ENCODE measurements at regions of chr3 and their contacts with region 1.

Region 1: GRCh38 chr3:161423911-161424522 is 52.7 kb upstream of the SPTSSB start:
- DNase-seq: peak; percentile 22
- H3K4me3 ChIP-seq: no peak overlapping the region
- H3K27ac ChIP-seq: no peak overlapping the region
- H3K4me1 ChIP-seq: peaks cover 14% of the 10 kb centered on the region
- H3K27me3 ChIP-seq: no peaks in the 10 kb centered on the region
- CTCF ChIP-seq: peak; percentile 49 to 55

Region 2: DNA sequence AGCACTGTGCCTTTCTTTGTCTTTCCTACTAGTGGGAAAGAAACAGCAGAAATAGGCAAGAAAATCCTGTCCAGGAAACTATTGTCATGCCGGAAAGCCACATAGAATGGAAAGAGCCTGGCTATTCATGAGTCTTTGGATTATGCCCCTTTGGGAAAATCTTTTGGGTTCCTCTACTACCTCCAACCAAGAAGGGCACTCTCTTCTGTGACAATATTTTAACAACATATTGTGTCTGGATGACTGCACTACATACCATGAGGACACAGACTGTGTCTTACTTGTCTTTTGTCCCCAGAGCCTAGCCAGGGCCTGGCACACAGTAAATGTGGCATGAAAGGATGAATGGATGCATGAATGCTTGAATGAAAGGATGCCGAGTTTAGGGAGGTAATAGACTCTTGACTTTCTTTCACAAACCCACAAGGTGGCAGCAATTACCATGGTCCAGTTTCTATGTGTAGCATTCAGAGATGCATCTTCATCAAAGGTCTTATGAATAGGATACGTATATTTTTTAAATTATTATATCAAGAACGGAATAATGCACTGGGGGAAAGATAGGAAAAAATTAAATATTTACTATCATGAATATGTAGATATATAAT is 716.7 kb before region 1 on chr3:
- CTCF ChIA-PET with region 1: no interaction called
- dilution Hi-C with region 1: no loop called
- in situ Hi-C with region 1: loop called (anchors 25 kb)
- intact Hi-C with region 1: loop called (anchors 1 kb)
- DNase-seq: peak; percentile 36
- H3K4me3 ChIP-seq: no peak overlapping the region
- H3K27ac ChIP-seq: no peak overlapping the region
- H3K4me1 ChIP-seq: no peaks in the 10 kb centered on the region
- H3K27me3 ChIP-seq: peaks cover 9% of the 10 kb centered on the region
- CTCF ChIP-seq: peak; percentile 37 to 68

Region 3: GRCh38 chr3:160941885-160942494 is 482.0 kb before region 1 on chr3:
- CTCF ChIA-PET with region 1: no interaction called
- dilution Hi-C with region 1: no loop called
- in situ Hi-C with region 1: loop called in 1 of 2 experiments (anchors 25 kb)
- intact Hi-C with region 1: loop called (anchors 5 kb)
- DNase-seq: peak; percentile 45
- H3K4me3 ChIP-seq: no peak overlapping the region
- H3K27ac ChIP-seq: no peak overlapping the region
- H3K4me1 ChIP-seq: no peaks in the 10 kb centered on the region
- H3K27me3 ChIP-seq: no peaks in the 10 kb centered on the region
- CTCF ChIP-seq: peak; percentile 81 to 82

Region 4: DNA sequence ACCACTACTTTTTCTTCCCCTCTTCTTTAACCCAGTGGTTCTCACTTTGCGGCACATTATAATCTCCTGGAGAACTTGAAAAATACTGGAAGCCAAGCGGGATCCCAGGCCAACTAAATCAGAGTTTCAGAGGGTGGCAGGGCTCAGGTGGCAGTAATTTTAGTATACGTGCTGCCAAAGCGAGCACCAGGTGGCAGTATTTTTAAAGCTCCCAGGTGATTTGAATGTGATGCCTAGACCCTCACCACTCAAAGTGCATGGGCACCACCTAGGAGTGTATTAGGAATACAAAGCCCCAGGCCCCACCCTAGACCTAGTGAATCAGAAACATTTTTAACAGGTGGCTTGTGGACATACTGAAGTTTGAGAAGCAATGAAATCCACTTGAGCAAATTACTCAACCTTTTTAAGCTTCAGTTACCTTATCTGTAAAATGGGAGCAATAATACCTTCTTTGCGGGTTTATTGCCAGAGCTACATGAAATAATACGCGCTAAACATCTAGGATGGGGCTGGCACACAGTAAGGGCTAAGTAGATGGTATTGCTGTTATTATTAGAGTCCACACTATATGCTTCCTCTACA is 327.2 kb before region 1 on chr3:
- CTCF ChIA-PET with region 1: no interaction called
- dilution Hi-C with region 1: no loop called
- in situ Hi-C with region 1: no loop called
- intact Hi-C with region 1: loop called (anchors 5 kb)
- DNase-seq: peak; percentile 11
- H3K4me3 ChIP-seq: no peak overlapping the region
- H3K27ac ChIP-seq: no peak overlapping the region
- H3K4me1 ChIP-seq: no peaks in the 10 kb centered on the region
- H3K27me3 ChIP-seq: no peaks in the 10 kb centered on the region
- CTCF ChIP-seq: peak; percentile 26 to 61

Region 5: GRCh38 chr3:161274719-161275298 is 149.2 kb before region 1 on chr3:
- CTCF ChIA-PET with region 1: no interaction called
- dilution Hi-C with region 1: no loop called
- in situ Hi-C with region 1: no loop called
- intact Hi-C with region 1: loop called (anchors 1 kb)
- DNase-seq: peak; percentile 55
- H3K4me3 ChIP-seq: no peak overlapping the region
- H3K27ac ChIP-seq: no peak overlapping the region
- H3K4me1 ChIP-seq: peaks cover 5% of the 10 kb centered on the region
- H3K27me3 ChIP-seq: no peaks in the 10 kb centered on the region
- CTCF ChIP-seq: peak; percentile 66 to 80

Region 6: GRCh38 chr3:161682715-161683114 is 258.7 kb after region 1 on chr3:
- CTCF ChIA-PET with region 1: no interaction called
- dilution Hi-C with region 1: no loop called
- in situ Hi-C with region 1: no loop called
- intact Hi-C with region 1: no loop called
- DNase-seq: peak; percentile 33
- H3K4me3 ChIP-seq: no peak overlapping the region
- H3K27ac ChIP-seq: no peak overlapping the region
- H3K4me1 ChIP-seq: no peaks in the 10 kb centered on the region
- H3K27me3 ChIP-seq: no peaks in the 10 kb centered on the region
- CTCF ChIP-seq: no peak